Endothelial cell of umbilical vein (primary cell): ENCODE measurements at regions of chr1 and their contacts with region 1.

Region 1: GRCh38 chr1:44029906-44030604 is 1.2 kb downstream of the SLC6A9 start:
- DNase-seq: peak; percentile 89
- H3K4me3 ChIP-seq: peak overlapping the region; percentile 35 to 76 (median 67)
- H3K27ac ChIP-seq: peak overlapping the region; percentile 24
- H3K4me1 ChIP-seq: peaks cover 7% of the 10 kb centered on the region
- H3K27me3 ChIP-seq: no peaks in the 10 kb centered on the region
- CTCF ChIP-seq: no peak
- POLR2A ChIP-seq: no peak

Region 2: GRCh38 chr1:43974443-43975248 is 55.4 kb before region 1 on chr1 and contains the start of gene ATP6V0B:
- CTCF ChIA-PET with region 1: interaction called, 3 read pairs
- POLR2A ChIA-PET with region 1: interaction called, 3 read pairs
- dilution Hi-C with region 1: no loop called
- intact Hi-C with region 1: loop called (anchors 2 kb)
- DNase-seq: peak; percentile 94
- H3K4me3 ChIP-seq: peak within 1 kb of the TSS; percentile 69 to 73 (median 71)
- H3K27ac ChIP-seq: peak within 1 kb of the TSS; percentile 48
- H3K4me1 ChIP-seq: peaks cover 29% of the 10 kb centered on the region
- H3K27me3 ChIP-seq: no peaks in the 10 kb centered on the region
- CTCF ChIP-seq: no peak
- POLR2A ChIP-seq: peak; percentile 91
- total RNA-seq, gene ATP6V0B: 105 and 110 TPM in 2 replicates

Region 3: GRCh38 chr1:43991476-43992231 is 38.4 kb before region 1 on chr1 and contains the start of gene CCDC24:
- CTCF ChIA-PET with region 1: no interaction called
- POLR2A ChIA-PET with region 1: no interaction called
- dilution Hi-C with region 1: no loop called
- intact Hi-C with region 1: loop called (anchors 5 kb)
- DNase-seq: peak; percentile 59
- H3K4me3 ChIP-seq: peak within 1 kb of the TSS; percentile 39 to 55 (median 49)
- H3K27ac ChIP-seq: no peak within 1 kb of the TSS
- H3K4me1 ChIP-seq: peaks cover 7% of the 10 kb centered on the region
- H3K27me3 ChIP-seq: no peaks in the 10 kb centered on the region
- CTCF ChIP-seq: no peak
- POLR2A ChIP-seq: peak; percentile 41
- total RNA-seq, gene CCDC24: 2.2 and 2.8 TPM in 2 replicates